Activated CD4-positive, alpha-beta T cell treated with anti-CD3 and anti-CD28 coated beads for 36 hours (primary cell): ENCODE measurements at regions of chr17 and their contacts with region 1.

Region 1: DNA sequence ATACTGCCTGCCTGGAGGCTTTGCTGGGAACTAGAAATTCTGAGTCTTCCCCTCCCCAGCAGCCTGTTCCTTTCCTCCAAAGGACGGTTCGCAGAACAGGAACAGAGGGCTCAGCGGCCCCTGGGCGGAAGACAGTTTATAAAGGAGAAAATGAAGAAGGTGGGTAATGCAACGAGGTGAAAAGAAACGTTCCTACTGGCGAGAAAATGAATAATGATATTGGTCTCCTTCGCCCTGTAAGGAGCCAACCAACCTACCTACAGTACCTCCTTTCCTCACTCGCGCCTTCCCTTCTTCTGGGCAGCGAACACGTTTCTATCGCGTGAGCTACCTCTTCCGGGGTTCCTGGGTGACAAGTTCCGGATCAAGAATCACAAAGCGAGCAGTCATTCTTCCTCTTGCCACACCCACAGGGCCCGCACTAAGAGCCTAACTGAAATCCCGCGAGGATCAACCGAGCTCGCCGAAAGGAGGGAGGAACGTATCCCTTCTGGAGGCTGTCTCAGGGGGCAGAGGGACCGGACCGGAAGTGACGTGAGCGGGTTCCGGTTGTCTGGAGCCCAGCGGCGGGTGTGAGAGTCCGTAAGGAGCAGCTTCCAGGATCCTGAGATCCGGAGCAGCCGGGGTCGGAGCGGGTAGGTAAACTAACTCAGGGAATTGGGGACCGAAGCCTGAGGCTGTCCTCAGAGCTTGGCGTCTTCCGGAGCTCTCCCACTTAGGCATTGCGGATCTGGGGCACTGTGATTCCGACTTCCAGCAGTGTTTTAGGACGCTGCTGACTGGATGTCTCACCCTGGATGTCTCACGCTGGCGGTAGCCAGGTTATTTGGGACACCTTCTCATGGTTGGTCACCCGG is at the starts of genes PTRH2 and VMP1:
- DNase-seq: peak; percentile 97
- ATAC-seq: peak; percentile 99
- H3K4me3 Mint-ChIP-seq: peak within 1 kb of the TSS; percentile 92
- H3K27ac Mint-ChIP-seq: peak within 1 kb of the TSS; percentile 96
- H3K4me1 Mint-ChIP-seq: peaks cover 60% of the 10 kb centered on the region
- H3K27me3 Mint-ChIP-seq: no peaks in the 10 kb centered on the region
- total RNA-seq, gene PTRH2: 41.7 to 54.7 TPM
- total RNA-seq, gene VMP1: 378 to 402 TPM

Region 2: DNA sequence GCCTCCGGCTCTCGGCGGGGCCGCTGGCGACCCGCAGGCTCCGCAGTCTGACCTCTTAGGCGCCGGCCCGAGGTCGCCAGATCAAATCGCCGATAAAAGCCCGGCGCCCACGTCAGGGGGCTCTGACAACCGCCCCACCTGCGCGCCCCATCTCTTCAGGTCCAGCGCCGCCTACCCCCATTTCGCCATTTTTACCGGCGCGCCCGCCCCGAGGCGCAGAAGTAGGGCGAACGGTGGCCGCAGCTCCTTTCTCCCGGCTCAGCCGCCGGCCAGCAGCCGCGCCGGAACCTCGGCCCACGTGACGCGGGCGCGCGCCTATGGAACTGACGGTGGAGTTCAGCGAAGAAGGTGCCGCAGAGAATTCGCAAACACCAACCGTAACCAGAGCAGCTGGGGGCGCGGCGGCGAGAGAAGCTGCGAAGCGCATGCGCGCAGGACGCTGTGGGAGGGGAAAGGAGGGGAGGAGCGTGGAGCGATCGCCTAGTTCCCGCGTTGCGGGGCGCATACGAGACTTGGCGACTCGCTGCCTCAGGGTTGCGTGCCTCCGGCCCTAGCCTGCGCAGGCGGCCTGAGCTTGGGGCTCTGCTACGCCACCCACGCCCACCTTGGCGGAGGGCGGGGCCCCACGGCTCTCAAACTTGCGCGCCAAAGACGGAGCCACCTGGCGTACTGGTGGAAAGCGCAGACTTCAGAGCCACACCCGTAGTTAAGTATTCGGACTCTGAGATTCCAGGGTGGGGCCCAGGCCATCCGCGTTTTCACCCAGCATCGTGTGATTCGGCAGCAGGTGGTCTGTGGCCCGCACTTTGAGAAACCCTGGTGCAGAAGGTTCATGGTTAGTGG is 600.7 kb before region 1 on chr17 and contains the start of gene TRIM37:
- CTCF ChIA-PET with region 1: no interaction called
- POLR2A ChIA-PET with region 1: no interaction called
- intact Hi-C with region 1: loop called in 1 of 2 experiments (anchors 1 kb)
- DNase-seq: peak; percentile 99
- ATAC-seq: peak; percentile 95
- H3K4me3 Mint-ChIP-seq: peak within 1 kb of the TSS; percentile 85
- H3K27ac Mint-ChIP-seq: peak within 1 kb of the TSS; percentile 92
- H3K4me1 Mint-ChIP-seq: peaks cover 49% of the 10 kb centered on the region
- H3K27me3 Mint-ChIP-seq: no peaks in the 10 kb centered on the region
- total RNA-seq, gene TRIM37: 21.3 to 22.7 TPM

Region 3: GRCh38 chr17:59634632-59635541 is 72.5 kb before region 1 on chr17:
- CTCF ChIA-PET with region 1: no interaction called
- POLR2A ChIA-PET with region 1: no interaction called
- intact Hi-C with region 1: no loop called
- DNase-seq: no peak
- ATAC-seq: peak; percentile 50
- H3K4me3 Mint-ChIP-seq: no peak overlapping the region
- H3K27ac Mint-ChIP-seq: peak overlapping the region; percentile 63
- H3K4me1 Mint-ChIP-seq: peaks cover 72% of the 10 kb centered on the region
- H3K27me3 Mint-ChIP-seq: no peaks in the 10 kb centered on the region

Region 4: GRCh38 chr17:59746849-59747445 is 39.6 kb after region 1 on chr17:
- CTCF ChIA-PET with region 1: interaction called, 15 read pairs
- POLR2A ChIA-PET with region 1: interaction called, 4 read pairs
- intact Hi-C with region 1: no loop called
- DNase-seq: no peak
- ATAC-seq: peak; percentile 64
- H3K4me3 Mint-ChIP-seq: no peak overlapping the region
- H3K27ac Mint-ChIP-seq: no peak overlapping the region
- H3K4me1 Mint-ChIP-seq: peaks cover 22% of the 10 kb centered on the region
- H3K27me3 Mint-ChIP-seq: no peaks in the 10 kb centered on the region

Region 5: DNA sequence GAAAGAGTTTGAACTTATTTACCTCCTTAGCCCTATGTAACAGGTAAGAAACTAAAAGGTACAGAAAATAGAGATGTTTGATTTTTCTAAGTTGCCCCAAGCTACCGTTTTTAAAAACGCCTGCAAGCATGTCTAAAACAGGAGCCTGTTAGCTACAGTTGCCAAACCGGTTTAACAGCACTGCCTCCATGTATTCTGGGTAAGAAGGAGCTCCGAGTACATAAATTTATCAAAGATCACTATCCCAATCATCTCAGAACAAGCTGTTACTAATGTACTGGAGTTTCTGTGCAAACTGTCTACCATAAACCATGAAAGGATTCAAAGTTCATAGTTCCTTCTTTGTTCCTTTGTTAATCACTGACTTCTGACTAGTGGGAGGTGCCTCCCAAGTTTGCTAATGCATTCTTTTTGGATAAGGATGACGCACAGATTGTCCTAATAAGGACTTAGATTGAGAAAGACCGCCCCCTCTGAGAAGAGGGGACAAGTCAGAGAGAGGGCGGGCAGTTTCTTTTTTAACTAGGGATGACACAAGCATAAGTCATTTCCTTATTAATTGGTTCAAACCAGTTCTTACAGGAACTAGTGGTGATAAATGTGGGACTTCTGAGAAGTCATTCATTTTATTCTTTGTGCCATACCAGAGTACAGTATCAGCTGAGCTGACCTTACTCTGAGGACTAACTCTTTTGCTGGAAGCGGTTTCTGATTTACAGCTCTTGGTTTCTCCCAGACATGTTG is 130.1 kb after region 1 on chr17:
- CTCF ChIA-PET with region 1: interaction called, 3 read pairs
- POLR2A ChIA-PET with region 1: interaction called, 20 read pairs
- intact Hi-C with region 1: no loop called
- DNase-seq: peak; percentile 77
- ATAC-seq: peak; percentile 77
- H3K4me3 Mint-ChIP-seq: peak overlapping the region; percentile 100
- H3K27ac Mint-ChIP-seq: peak overlapping the region; percentile 100
- H3K4me1 Mint-ChIP-seq: peaks cover 41% of the 10 kb centered on the region
- H3K27me3 Mint-ChIP-seq: peaks cover 3% of the 10 kb centered on the region

Region 6: DNA sequence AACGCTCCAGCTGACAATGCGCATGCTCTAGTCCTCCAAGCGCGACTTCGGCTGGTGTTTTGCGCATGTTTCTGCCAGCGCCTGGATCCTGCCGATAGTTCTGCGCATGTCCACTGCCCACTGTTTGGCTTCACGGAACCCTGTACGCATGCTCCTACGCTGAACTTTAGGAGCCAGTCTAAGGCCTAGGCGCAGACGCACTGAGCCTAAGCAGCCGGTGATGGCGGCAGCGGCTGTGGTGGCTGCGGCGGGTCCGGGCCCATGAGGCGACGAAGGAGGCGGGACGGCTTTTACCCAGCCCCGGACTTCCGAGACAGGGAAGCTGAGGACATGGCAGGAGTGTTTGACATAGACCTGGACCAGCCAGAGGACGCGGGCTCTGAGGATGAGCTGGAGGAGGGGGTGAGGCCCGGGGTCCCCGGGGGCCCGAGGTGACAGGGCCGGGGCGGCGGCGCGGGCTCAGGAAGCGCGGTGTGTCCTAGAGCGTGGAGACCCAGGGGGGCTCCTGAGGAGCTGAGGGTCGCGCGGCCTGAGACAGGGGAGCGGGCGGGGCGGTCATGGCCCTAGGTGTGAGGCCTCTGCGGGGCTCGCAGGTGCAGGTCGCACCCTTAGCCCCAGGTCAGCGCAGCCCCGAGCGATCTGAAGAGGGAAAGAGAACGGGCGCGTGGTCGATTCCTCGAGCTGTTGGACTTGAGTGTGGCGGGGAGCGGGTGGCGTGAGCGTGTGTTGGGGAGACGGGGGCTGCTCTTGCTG is 185.8 kb after region 1 on chr17 and contains the starts of genes RPS6KB1 and TUBD1:
- CTCF ChIA-PET with region 1: interaction called, 3 read pairs
- POLR2A ChIA-PET with region 1: no interaction called
- intact Hi-C with region 1: loop called (anchors 1 to 2 kb)
- DNase-seq: peak; percentile 98
- ATAC-seq: peak; percentile 97
- H3K4me3 Mint-ChIP-seq: peak within 1 kb of the TSS; percentile 99
- H3K27ac Mint-ChIP-seq: peak within 1 kb of the TSS; percentile 97
- H3K4me1 Mint-ChIP-seq: peaks cover 45% of the 10 kb centered on the region
- H3K27me3 Mint-ChIP-seq: no peaks in the 10 kb centered on the region
- total RNA-seq, gene RPS6KB1: 52.6 to 54.5 TPM
- total RNA-seq, gene TUBD1: 10.6 to 11.0 TPM

Region 7: DNA sequence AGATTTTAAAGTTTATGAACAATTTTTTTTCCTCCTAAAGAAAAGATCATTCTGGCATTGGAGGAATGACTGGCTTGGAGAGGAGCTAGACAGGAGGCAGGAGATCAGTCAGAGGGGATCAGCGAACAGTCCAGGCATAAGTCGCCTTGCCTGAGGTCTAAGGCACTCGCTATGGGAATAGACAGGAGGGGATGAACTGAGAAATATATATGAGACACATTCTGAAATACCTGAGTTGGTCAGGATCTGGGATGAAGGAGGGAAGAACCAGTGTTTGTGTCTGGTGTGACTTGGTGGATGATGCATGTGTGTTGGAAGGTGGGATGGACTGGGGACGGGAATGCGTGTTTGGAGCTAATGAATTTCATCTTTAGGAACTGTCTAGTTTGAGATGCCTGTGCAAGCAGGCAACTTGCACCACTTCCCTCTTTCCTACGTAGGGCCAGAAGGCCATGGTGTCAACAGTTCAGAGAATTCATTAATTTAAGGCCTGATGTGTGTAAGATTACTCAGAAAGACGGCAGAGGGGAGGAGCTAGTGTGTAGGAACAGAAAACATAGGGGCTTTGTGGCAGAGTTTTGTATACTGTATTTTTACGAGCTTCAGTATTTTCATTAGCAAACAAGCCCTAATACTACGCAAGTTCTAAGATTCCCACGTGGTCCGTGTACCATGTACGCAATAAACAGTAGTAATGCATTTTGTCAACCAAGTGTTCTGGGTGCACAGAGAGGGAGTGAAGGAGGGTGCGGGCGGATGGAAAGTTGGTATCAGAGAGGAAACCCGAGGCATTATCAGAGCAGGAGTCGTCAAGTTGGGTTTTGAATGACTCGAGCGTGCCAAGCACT is 370.6 kb after region 1 on chr17:
- CTCF ChIA-PET with region 1: no interaction called
- POLR2A ChIA-PET with region 1: no interaction called
- intact Hi-C with region 1: loop called in 1 of 2 experiments (anchors 1 kb)
- DNase-seq: peak; percentile 81
- ATAC-seq: peak; percentile 73
- H3K4me3 Mint-ChIP-seq: peak overlapping the region; percentile 84
- H3K27ac Mint-ChIP-seq: peak overlapping the region; percentile 95
- H3K4me1 Mint-ChIP-seq: peaks cover 19% of the 10 kb centered on the region
- H3K27me3 Mint-ChIP-seq: no peaks in the 10 kb centered on the region

Region 8: DNA sequence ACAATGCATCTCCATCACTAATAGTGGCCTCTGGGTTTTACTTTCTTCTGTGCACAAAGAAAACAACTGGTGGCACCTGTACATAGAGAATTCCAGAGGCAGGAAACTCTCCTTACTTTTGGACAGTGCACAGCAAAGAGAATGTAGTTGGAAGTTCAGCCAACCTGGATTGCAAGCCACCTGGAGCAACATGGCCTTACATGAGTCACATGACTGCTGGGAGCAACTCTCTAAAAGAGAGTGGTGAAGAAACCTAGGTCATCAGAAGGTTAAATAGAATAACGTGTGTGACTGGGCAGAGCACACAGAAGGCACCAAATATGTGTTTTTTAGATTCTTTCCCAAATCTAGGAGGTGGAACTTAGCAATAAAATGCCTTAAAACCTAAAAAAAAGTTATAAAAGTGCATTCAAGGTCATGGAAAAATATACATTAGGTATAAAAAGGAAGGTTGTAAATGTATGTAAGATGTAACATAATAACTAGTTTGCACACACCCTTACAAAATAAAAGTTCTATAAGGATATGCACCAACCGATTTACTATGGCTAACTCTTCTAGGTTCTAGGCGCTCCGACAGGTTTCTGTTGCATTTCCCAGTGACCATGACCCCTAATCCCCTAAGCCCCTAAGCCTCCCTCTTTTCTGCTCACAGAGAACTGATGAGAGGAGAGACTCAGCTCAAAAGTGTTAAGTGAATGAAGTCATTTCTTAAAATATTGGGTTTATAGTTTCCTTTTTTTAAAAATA is 401.1 kb after region 1 on chr17:
- CTCF ChIA-PET with region 1: no interaction called
- POLR2A ChIA-PET with region 1: no interaction called
- intact Hi-C with region 1: no loop called
- DNase-seq: no peak
- ATAC-seq: no peak
- H3K4me3 Mint-ChIP-seq: no peak overlapping the region
- H3K27ac Mint-ChIP-seq: no peak overlapping the region
- H3K4me1 Mint-ChIP-seq: no peaks in the 10 kb centered on the region
- H3K27me3 Mint-ChIP-seq: peaks cover 13% of the 10 kb centered on the region

Region 9: GRCh38 chr17:61179380-61179806 is 1472.1 kb after region 1 on chr17:
- CTCF ChIA-PET with region 1: no interaction called
- POLR2A ChIA-PET with region 1: no interaction called
- intact Hi-C with region 1: no loop called
- DNase-seq: no peak
- ATAC-seq: no peak
- H3K4me3 Mint-ChIP-seq: no peak overlapping the region
- H3K27ac Mint-ChIP-seq: no peak overlapping the region
- H3K4me1 Mint-ChIP-seq: no peaks in the 10 kb centered on the region
- H3K27me3 Mint-ChIP-seq: no peaks in the 10 kb centered on the region